ENCODE measurements at regions of chr10 and their contacts with region 1.

Region 1: GRCh38 chr10:77524281-77524711 is 113.3 kb downstream of the KCNMA1 start:
- DNase-seq: no peak
- ATAC-seq: no peak
- H3K4me3 ChIP-seq: no peak overlapping the region
- H3K27ac ChIP-seq: no peak overlapping the region
- H3K4me1 ChIP-seq: no peaks in the 10 kb centered on the region
- H3K27me3 ChIP-seq: no peaks in the 10 kb centered on the region; a peak in 1 of 4 replicates
- CTCF ChIP-seq: no peak
- EP300 ChIP-seq: no peak
- POLR2A ChIP-seq: no peak
- RAD21 ChIP-seq: no peak

Region 2: GRCh38 chr10:77494327-77494726 is 30.0 kb before region 1 on chr10:
- CTCF ChIA-PET with region 1: interaction called, 5 read pairs
- POLR2A ChIA-PET with region 1: interaction called, 5 read pairs
- RAD21 ChIA-PET with region 1: interaction called, 6 read pairs
- SMC1A ChIA-PET with region 1: interaction called, 14 read pairs
- in situ Hi-C with region 1: no loop called
- intact Hi-C with region 1: no loop called
- DNase-seq: no peak
- ATAC-seq: peak; percentile 13
- H3K4me3 ChIP-seq: no peak overlapping the region
- H3K27ac ChIP-seq: no peak overlapping the region
- H3K4me1 ChIP-seq: peaks cover 14% of the 10 kb centered on the region
- H3K27me3 ChIP-seq: no peaks in the 10 kb centered on the region
- CTCF ChIP-seq: 0 out of 6 replicates have a peak, but pooled peaks of 1 of the 3 experiments have one; percentile 4
- EP300 ChIP-seq: no peak
- POLR2A ChIP-seq: no peak
- RAD21 ChIP-seq: no peak

Region 3: GRCh38 chr10:77513781-77514331 is 10.4 kb before region 1 on chr10:
- CTCF ChIA-PET with region 1: interaction called, 3 read pairs
- POLR2A ChIA-PET with region 1: interaction called, 4 read pairs
- RAD21 ChIA-PET with region 1: interaction called, 12 read pairs
- SMC1A ChIA-PET with region 1: interaction called, 7 read pairs
- in situ Hi-C with region 1: no loop called
- intact Hi-C with region 1: no loop called
- DNase-seq: no peak
- ATAC-seq: no peak; the same call in 2 of the 3 replicates
- H3K4me3 ChIP-seq: no peak overlapping the region
- H3K27ac ChIP-seq: no peak overlapping the region
- H3K4me1 ChIP-seq: no peaks in the 10 kb centered on the region
- H3K27me3 ChIP-seq: no peaks in the 10 kb centered on the region
- CTCF ChIP-seq: no peak
- EP300 ChIP-seq: no peak
- POLR2A ChIP-seq: no peak
- RAD21 ChIP-seq: no peak

Region 4: GRCh38 chr10:77564731-77565589 is 40.7 kb after region 1 on chr10:
- CTCF ChIA-PET with region 1: interaction called, 3 read pairs
- POLR2A ChIA-PET with region 1: interaction called, 3 read pairs
- RAD21 ChIA-PET with region 1: interaction called, 10 read pairs
- SMC1A ChIA-PET with region 1: interaction called, 5 read pairs
- in situ Hi-C with region 1: no loop called
- intact Hi-C with region 1: no loop called
- DNase-seq: no peak
- ATAC-seq: peak; percentile 13; the same call in 2 of the 3 replicates
- H3K4me3 ChIP-seq: no peak overlapping the region
- H3K27ac ChIP-seq: no peak overlapping the region
- H3K4me1 ChIP-seq: no peaks in the 10 kb centered on the region
- H3K27me3 ChIP-seq: no peaks in the 10 kb centered on the region
- CTCF ChIP-seq: no peak
- EP300 ChIP-seq: no peak
- POLR2A ChIP-seq: no peak
- RAD21 ChIP-seq: no peak

Region 5: DNA sequence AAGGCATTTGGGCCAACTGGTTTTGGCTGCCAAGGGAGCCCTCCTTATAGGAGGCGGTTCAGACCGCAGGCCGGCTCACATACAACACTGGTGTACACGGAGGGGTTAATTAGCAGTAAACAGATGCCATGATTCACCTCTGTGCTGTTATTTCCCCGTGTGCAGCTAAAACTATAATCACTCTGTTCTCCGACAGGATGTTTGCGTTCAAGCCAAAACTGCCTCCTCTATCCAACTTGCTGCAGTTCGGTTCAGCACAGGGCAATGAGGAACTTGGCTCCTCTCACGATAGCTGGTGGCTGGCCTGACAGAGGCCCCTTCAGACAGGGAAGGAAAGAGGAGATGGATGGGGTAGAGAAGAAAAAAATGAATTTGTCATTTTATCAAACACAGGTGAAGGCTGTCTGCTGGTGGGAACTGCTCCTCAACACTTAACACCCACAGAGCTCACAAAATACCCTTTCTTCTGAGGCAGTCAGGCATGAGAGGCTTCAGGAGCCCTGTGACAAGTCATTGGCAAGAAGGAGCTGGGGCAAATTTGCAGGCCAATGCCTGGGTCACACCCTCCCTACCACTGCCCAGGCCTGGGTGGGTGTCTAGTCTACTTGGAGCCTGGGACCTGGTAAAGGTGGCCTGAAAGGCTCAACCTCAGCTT is 89.3 kb after region 1 on chr10:
- CTCF ChIA-PET with region 1: no interaction called
- POLR2A ChIA-PET with region 1: interaction called, 5 read pairs
- RAD21 ChIA-PET with region 1: interaction called, 9 read pairs
- SMC1A ChIA-PET with region 1: interaction called, 10 read pairs
- in situ Hi-C with region 1: no loop called
- intact Hi-C with region 1: no loop called
- DNase-seq: no peak
- ATAC-seq: peak; percentile 83
- H3K4me3 ChIP-seq: no peak overlapping the region
- H3K27ac ChIP-seq: no peak overlapping the region
- H3K4me1 ChIP-seq: peaks cover 3% of the 10 kb centered on the region; the same call in 1 of the 2 replicates
- H3K27me3 ChIP-seq: no peaks in the 10 kb centered on the region; a peak in 1 of 4 replicates
- CTCF ChIP-seq: no peak
- EP300 ChIP-seq: peak; percentile 46 to 48; a peak in 3 of 4 replicates
- POLR2A ChIP-seq: no peak
- RAD21 ChIP-seq: no peak

Region 6: DNA sequence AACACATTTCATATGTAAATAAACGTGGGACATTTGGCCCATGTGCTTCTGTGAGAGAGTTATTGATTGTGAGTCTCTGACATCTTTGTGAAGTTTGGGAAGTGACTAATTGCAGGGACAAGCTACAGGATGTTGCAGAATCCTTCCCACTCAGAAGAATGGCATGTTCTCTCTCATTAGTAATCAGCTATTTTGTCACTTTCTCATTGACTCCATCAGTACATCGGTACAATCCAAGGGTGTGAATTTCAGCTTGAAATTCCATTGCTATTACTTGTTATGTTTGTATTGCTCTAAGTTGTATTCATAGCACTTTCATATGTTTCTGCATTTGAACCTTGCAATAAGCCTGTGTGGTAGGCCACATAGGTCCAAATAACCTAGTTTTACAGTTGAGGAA is 213.3 kb after region 1 on chr10:
- CTCF ChIA-PET with region 1: no interaction called
- POLR2A ChIA-PET with region 1: no interaction called
- RAD21 ChIA-PET with region 1: no interaction called
- SMC1A ChIA-PET with region 1: no interaction called
- in situ Hi-C with region 1: no loop called
- intact Hi-C with region 1: no loop called
- DNase-seq: no peak
- ATAC-seq: no peak
- H3K4me3 ChIP-seq: no peak overlapping the region
- H3K27ac ChIP-seq: no peak overlapping the region
- H3K4me1 ChIP-seq: no peaks in the 10 kb centered on the region
- H3K27me3 ChIP-seq: peaks cover 0 to 1% of the 10 kb centered on the region in 2 experiments; a peak in 1 of 4 replicates
- CTCF ChIP-seq: no peak
- EP300 ChIP-seq: no peak
- POLR2A ChIP-seq: no peak
- RAD21 ChIP-seq: no peak